ENCODE measurements at regions of chr1 and their contacts with region 1.

Region 1: DNA sequence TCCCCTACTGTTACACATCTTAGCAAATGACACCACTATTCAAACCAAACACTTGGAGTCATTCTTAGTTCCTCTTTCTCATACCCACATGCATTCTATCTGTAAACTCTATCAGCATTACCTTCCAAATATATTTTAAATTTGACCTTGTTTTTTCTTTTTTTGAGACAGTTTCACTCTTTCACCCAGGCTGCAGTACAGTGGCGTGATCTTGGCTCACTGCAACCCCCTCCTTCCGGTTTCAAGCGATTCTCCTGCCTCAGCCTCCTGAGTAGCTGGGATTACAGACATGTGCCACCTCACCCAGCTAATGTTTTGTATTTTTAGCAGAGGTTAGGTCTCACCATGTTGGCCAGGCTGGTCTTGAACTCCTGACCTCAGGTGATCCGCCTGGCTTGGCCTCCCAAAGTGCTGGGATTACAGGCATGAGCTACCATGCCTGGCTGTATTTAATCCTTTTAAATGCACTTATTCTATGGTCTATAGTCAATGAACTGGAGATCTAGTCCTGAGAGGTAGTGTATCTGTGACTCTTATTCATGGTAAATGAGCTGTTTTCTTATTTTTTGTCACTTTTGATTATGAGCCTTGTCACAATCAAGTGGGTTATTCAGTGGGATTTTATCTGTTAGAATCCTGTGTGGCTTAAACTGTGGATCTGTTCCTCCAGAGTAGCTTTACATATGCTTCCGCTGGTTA is 73.1 kb downstream of the GATAD2B start:
- DNase-seq: peak; percentile 59
- ATAC-seq: peak; percentile 80
- H3K4me3 Mint-ChIP-seq: peak overlapping the region; percentile 22
- H3K27ac Mint-ChIP-seq: peak overlapping the region; percentile 94
- H3K4me1 Mint-ChIP-seq: peaks cover 29% of the 10 kb centered on the region
- H3K27me3 Mint-ChIP-seq: no peaks in the 10 kb centered on the region

Region 2: GRCh38 chr1:153908071-153908470 is 58.4 kb after region 1 on chr1:
- CTCF ChIA-PET with region 1: no interaction called
- POLR2A ChIA-PET with region 1: no interaction called
- intact Hi-C with region 1: loop called in 1 of 2 experiments (anchors 5 kb)
- DNase-seq: no peak
- ATAC-seq: no peak
- H3K4me3 Mint-ChIP-seq: no peak overlapping the region
- H3K27ac Mint-ChIP-seq: no peak overlapping the region
- H3K4me1 Mint-ChIP-seq: peaks cover 47% of the 10 kb centered on the region
- H3K27me3 Mint-ChIP-seq: no peaks in the 10 kb centered on the region